Endothelial cell of umbilical vein (primary cell): ENCODE measurements at regions of chr10 and their contacts with region 1.

Region 1: DNA sequence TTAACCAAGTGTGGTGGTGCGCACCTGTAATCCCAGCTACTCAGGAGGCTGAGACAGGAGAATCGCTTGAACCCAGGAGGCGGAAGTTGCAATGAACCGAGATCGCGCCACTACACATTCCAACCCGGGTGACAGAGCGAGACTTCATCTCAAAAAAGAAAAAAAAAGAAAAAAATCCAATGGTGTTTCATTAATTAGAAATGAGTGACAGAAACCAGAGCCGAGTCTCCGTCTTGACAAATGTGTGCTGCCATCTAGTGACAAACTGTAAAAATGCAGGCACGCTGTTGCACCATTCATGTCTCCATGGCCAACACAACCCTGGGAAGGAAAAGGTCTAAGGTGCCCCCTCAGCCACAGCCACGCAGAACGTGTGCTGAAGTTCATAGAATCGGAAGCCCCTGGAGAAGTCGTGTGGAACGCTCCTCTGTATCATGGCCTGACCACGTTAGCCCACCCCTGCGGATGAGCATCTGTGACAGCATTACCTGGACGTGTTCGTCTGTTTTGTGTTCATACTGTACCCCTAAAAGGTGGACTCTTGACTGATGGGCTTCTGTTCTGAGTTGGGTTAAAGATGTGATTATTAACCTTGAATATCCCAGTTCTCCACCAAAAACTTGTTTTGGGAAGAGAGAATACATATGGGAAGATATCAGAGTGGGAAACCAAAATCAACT is 94.9 kb downstream of the LYZL2 start:
- DNase-seq: peak; percentile 66
- H3K4me3 ChIP-seq: no peak overlapping the region
- H3K27ac ChIP-seq: no peak overlapping the region
- H3K4me1 ChIP-seq: peaks cover 10% of the 10 kb centered on the region
- H3K27me3 ChIP-seq: no peaks in the 10 kb centered on the region
- CTCF ChIP-seq: peak; percentile 76 to 81
- POLR2A ChIP-seq: no peak

Region 2: GRCh38 chr10:30413996-30414576 is 120.5 kb before region 1 on chr10:
- CTCF ChIA-PET with region 1: interaction called, 32 read pairs
- POLR2A ChIA-PET with region 1: no interaction called
- dilution Hi-C with region 1: no loop called
- intact Hi-C with region 1: loop called (anchors 1 kb)
- DNase-seq: peak; percentile 69
- H3K4me3 ChIP-seq: no peak overlapping the region
- H3K27ac ChIP-seq: no peak overlapping the region
- H3K4me1 ChIP-seq: peaks cover 2% of the 10 kb centered on the region
- H3K27me3 ChIP-seq: no peaks in the 10 kb centered on the region
- CTCF ChIP-seq: peak; percentile 59 to 64
- POLR2A ChIP-seq: no peak

Region 3: GRCh38 chr10:30433730-30434272 is 100.8 kb before region 1 on chr10 and contains the start of gene MAP3K8:
- CTCF ChIA-PET with region 1: interaction called, 3 read pairs
- POLR2A ChIA-PET with region 1: no interaction called
- dilution Hi-C with region 1: no loop called
- intact Hi-C with region 1: loop called (anchors 1 kb)
- DNase-seq: peak; percentile 97
- H3K4me3 ChIP-seq: peak within 1 kb of the TSS; percentile 70 to 78 (median 74)
- H3K27ac ChIP-seq: peak within 1 kb of the TSS; percentile 84
- H3K4me1 ChIP-seq: peaks cover 21% of the 10 kb centered on the region
- H3K27me3 ChIP-seq: no peaks in the 10 kb centered on the region
- CTCF ChIP-seq: no peak
- POLR2A ChIP-seq: peak; percentile 88
- total RNA-seq, gene MAP3K8: 8.1 and 10.6 TPM in 2 replicates

Region 4: DNA sequence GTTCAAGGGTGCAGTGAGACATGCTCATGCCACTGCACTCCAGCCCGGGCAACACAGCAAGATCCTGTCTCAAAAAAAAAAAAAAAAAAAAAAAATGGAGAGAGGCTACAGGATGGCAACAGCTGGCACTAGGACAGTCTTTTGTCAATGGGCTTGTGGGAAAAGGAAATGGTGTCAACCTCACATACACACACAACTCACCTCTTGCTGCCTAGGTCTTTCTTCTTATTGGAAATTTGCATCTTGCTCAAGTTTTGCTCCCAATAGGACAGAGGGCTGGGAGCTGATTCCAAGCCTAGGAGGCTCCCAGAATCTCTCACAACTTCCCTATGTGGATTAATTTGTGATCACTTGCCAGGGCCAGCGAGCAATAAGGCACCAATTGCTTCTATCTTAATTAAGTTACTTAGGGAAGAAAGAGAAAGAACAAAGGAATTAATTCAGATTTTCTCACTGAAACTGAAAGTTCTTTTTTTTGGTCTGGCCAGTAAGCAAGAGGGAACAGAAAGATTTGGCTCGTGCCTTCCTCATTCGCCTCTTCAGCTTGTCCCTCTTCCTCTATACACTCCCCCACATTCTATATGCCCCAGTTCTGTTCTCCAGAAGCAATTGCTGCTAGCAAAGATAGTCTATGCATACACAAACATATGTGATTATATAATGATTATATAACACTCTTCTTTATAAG is 66.8 kb before region 1 on chr10:
- CTCF ChIA-PET with region 1: no interaction called
- POLR2A ChIA-PET with region 1: no interaction called
- dilution Hi-C with region 1: no loop called
- intact Hi-C with region 1: no loop called
- DNase-seq: no peak
- H3K4me3 ChIP-seq: no peak overlapping the region
- H3K27ac ChIP-seq: no peak overlapping the region
- H3K4me1 ChIP-seq: no peaks in the 10 kb centered on the region
- H3K27me3 ChIP-seq: no peaks in the 10 kb centered on the region
- CTCF ChIP-seq: no peak
- POLR2A ChIP-seq: no peak

Region 5: DNA sequence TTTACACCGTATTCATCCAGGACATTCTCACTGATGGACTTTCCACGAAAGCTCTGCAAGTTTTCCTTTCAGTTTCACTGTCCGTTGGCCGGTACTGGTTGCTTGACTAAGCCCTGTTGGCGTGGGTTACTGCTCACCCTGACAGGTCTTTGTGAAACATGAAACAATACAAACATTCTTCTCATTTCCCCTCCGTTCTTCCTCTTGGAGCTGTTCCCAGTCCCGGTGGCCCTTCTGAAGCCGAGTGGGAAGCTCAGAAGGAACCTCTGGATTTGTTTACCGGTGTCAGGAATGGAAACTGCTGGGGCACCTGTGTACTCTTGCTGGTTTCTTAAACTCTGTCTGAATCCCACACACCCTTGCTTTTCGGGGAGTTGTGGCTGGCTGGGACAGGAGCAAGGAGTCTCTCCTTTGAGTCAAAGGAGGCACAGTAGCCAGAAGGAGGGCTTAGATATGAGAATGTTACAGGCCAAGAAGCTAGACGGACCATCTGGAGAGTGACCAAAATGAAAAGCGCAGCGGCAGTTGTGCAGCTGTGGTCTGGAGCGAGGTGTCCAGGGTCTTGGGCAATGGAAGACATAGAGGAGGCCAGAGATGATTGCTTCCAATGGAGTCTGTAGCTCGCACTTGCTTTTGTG is 49.3 kb after region 1 on chr10:
- CTCF ChIA-PET with region 1: interaction called, 9 read pairs
- POLR2A ChIA-PET with region 1: no interaction called
- dilution Hi-C with region 1: no loop called
- intact Hi-C with region 1: loop called (anchors 5 kb)
- DNase-seq: peak; percentile 96
- H3K4me3 ChIP-seq: peak overlapping the region; percentile 27 to 60 (median 39)
- H3K27ac ChIP-seq: peak overlapping the region; percentile 55
- H3K4me1 ChIP-seq: peaks cover 15% of the 10 kb centered on the region
- H3K27me3 ChIP-seq: peaks cover 0 to 2% of the 10 kb centered on the region in 2 experiments
- CTCF ChIP-seq: no peak
- POLR2A ChIP-seq: no peak

Region 6: DNA sequence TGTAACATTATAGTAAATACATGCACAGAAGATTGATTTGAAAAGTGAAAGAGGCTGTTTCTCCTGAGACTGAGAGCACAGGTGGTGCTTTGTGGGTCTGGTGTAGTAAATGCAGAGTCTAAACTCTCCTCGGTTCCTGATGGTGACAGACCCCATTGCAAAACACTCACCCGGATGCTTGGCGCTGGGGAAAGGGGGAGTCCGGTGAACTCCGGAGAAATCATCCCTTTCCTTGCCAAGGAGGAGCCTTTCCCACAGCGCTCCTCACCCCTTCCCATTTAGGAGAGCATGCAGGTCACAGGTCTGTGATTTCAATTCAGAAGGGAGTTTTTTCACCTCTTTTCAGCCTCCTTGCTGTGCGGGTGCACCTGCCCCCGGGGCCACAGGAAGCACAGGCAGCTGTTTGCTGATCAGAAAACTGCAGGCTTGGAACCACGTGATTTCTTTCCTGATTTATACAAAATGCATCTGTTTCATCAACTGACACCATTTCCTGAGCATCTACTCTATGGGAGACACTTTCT is 170.6 kb after region 1 on chr10:
- CTCF ChIA-PET with region 1: no interaction called
- POLR2A ChIA-PET with region 1: no interaction called
- dilution Hi-C with region 1: no loop called
- intact Hi-C with region 1: no loop called
- DNase-seq: no peak
- H3K4me3 ChIP-seq: no peak overlapping the region
- H3K27ac ChIP-seq: no peak overlapping the region
- H3K4me1 ChIP-seq: no peaks in the 10 kb centered on the region
- H3K27me3 ChIP-seq: peaks cover 4 to 16% of the 10 kb centered on the region in 2 experiments
- CTCF ChIP-seq: no peak
- POLR2A ChIP-seq: no peak